Aorta (tissue), 5 donors: ENCODE measurements at regions of chr11 and their contacts with region 1.

Region 1: GRCh38 chr11:30488304-30488998 is 97.7 kb downstream of the MPPED2 start:
- DNase-seq: no peak
- ATAC-seq: peak; percentile 65
- H3K4me3 ChIP-seq: no peak overlapping the region
- H3K27ac ChIP-seq: peak overlapping the region; percentile 12 to 90
- H3K4me1 ChIP-seq: peaks cover 0 to 7% of the 10 kb centered on the region in 2 donors
- H3K27me3 ChIP-seq: no peaks in the 10 kb centered on the region

Region 2: DNA sequence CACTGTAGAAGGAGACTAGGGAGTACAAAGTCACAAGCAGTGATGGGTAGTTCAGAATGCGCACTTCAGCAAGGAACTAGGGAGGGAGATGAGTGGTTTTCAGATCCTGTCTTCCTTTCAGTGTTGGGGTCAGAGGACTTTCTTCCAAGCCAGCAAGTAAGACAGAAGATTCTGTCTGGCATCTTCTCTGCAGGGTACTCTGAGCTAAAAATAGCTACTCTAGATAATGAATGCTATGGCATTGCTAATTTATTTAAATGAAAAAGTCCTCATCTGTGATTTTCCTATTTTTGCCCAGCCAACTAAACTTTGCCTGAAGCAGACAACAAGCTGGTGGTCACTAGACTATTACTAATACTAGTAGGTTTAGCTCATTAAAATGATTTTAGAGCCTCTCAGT is 183.8 kb before region 1 on chr11:
- intact Hi-C with region 1: no loop called
- DNase-seq: no peak
- ATAC-seq: no peak
- H3K4me3 ChIP-seq: no peak overlapping the region
- H3K27ac ChIP-seq: no peak overlapping the region
- H3K4me1 ChIP-seq: no peaks in the 10 kb centered on the region
- H3K27me3 ChIP-seq: no peaks in the 10 kb centered on the region

Region 3: GRCh38 chr11:30322826-30323710 is 165.4 kb before region 1 on chr11 and contains the start of gene ARL14EP:
- intact Hi-C with region 1: no loop called
- DNase-seq: peak; percentile 95 to 96
- ATAC-seq: peak; percentile 99
- H3K4me3 ChIP-seq: peak within 1 kb of the TSS; percentile 68 to 83
- H3K27ac ChIP-seq: peak within 1 kb of the TSS in 1 of 2 donors; percentile 39
- H3K4me1 ChIP-seq: peaks cover 0 to 3% of the 10 kb centered on the region in 2 donors
- H3K27me3 ChIP-seq: no peaks in the 10 kb centered on the region
- total RNA-seq, gene ARL14EP: 21.0 to 23.7 TPM

Region 4: GRCh38 chr11:30545507-30545906 is 57.1 kb after region 1 on chr11:
- intact Hi-C with region 1: no loop called
- DNase-seq: no peak
- ATAC-seq: no peak
- H3K4me3 ChIP-seq: no peak overlapping the region
- H3K27ac ChIP-seq: no peak overlapping the region
- H3K4me1 ChIP-seq: peaks cover 3 to 10% of the 10 kb centered on the region in 2 donors
- H3K27me3 ChIP-seq: no peaks in the 10 kb centered on the region

Region 5: GRCh38 chr11:30561691-30562415 is 73.4 kb after region 1 on chr11:
- intact Hi-C with region 1: loop called in 1 of 2 experiments (anchors 5 kb)
- DNase-seq: no peak
- ATAC-seq: no peak
- H3K4me3 ChIP-seq: no peak overlapping the region
- H3K27ac ChIP-seq: peak overlapping the region in 1 of 2 donors; percentile 71
- H3K4me1 ChIP-seq: peaks cover 2 to 4% of the 10 kb centered on the region in 2 donors
- H3K27me3 ChIP-seq: no peaks in the 10 kb centered on the region